ENCODE measurements at regions of chr1 and their contacts with region 1.

Region 1: GRCh38 chr1:40344597-40344996 is 27.5 kb upstream of the COL9A2 start:
- DNase-seq: peak in 6 of 10 donors; percentile 14 to 52 (median 40)
- H3K4me3 ChIP-seq: peak overlapping the region in 25 of 59 donors; percentile 3 to 35 (median 17)
- H3K27ac ChIP-seq: peak overlapping the region in 7 of 59 donors; percentile 4 to 53 (median 23)
- H3K27me3 ChIP-seq: no peaks in the 10 kb centered on the region
- CTCF ChIP-seq: peak in 3 of 56 donors; percentile 10 to 18 (median 15)

Region 2: DNA sequence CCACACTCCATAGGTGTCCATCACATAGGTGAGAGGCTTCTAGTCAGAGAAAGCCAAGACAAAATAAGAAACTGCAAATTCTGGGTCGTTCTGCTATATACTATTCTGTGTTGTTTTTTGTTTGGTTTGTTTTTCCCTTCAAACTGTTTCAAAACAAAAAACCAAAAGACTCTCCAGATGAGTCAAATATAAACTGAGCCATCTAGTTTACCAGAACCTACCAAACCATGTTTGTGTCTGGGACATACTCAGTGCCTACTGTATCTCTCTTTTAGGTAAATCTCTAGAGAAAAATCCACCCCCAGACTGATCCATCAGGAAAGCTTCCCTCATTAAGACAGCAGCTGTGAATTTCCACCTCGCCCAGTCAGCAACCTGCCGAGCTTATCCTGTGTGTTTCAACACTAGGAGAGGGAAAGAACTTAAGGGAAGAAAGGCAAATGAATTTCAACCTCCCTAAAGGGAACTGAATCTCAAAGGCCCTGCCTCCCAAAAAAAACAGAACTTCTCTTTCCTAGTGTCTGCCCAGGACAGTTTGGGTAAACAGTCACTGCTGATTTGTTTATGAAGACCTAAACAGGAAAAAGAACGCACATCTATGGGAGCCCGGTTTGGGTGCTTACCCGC is 264.7 kb before region 1 on chr1:
- intact Hi-C with region 1: loop called in 1 of 2 experiments (anchors 10 kb)
- DNase-seq: no peak
- H3K4me3 ChIP-seq: no peak overlapping the region
- H3K27ac ChIP-seq: peak overlapping the region in 16 of 59 donors; percentile 0 to 53 (median 26)
- H3K27me3 ChIP-seq: no peaks in the 10 kb centered on the region
- CTCF ChIP-seq: no peak

Region 3: DNA sequence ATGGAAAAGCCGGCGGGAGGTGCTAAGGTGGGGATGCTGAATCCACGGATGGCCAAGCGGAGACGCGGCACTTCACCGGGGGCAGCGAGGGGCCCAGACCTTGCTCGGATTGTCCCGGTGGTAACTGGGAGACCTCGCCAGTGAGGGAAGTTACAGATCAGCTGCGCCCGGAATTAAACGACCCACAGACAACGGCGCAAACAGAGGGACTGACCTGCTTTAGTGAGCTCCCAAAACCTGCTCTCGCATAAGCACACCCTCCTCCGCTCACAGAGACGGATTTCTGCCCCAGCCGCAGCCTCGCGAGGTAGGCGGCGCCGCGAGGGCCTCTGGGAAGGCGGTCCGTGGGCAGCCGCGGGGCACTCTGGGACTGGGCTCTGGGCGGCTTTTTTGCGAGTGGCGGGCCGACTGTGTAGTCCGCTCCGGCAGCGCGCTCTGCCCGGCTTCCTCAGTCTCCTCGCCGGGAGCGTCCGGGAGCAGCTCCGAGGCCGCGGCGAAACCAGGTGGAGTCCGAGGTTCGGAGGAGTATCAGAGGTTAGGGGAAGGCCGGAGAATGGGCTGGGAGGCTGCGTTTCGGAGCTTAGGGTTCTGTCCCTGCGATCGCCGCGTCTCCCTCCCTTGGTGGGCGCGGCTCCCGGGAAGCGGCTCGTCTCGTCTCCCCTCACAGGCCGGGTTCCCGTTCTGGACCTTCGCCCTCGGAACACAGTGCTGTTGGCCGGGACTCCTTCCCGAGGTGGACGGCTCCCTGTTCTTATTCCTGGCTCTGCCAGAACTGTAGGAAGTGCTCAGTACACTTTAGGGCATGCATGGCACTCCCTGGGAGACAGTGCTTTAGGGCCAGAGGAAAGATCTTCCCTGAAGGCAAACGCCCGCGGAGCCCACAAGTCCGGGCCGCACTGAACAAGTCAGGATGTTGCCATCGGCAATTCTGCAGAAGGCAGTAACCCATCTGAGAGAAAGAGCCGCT is 164.1 kb after region 1 on chr1 and contains the start of gene EXO5:
- intact Hi-C with region 1: no loop called
- DNase-seq: peak; percentile 55 to 89 (median 72)
- H3K4me3 ChIP-seq: peak within 1 kb of the TSS; percentile 55 to 97 (median 83)
- H3K27ac ChIP-seq: peak within 1 kb of the TSS in 39 of 59 donors; percentile 1 to 87 (median 51)
- H3K27me3 ChIP-seq: no peaks in the 10 kb centered on the region
- CTCF ChIP-seq: peak in 29 of 56 donors; percentile 8 to 52 (median 32)
- total RNA-seq, gene EXO5: 4.9 to 15.6 (median 9.1) TPM